ENCODE measurements at regions of chrX and their contacts with region 1.

Region 1: DNA sequence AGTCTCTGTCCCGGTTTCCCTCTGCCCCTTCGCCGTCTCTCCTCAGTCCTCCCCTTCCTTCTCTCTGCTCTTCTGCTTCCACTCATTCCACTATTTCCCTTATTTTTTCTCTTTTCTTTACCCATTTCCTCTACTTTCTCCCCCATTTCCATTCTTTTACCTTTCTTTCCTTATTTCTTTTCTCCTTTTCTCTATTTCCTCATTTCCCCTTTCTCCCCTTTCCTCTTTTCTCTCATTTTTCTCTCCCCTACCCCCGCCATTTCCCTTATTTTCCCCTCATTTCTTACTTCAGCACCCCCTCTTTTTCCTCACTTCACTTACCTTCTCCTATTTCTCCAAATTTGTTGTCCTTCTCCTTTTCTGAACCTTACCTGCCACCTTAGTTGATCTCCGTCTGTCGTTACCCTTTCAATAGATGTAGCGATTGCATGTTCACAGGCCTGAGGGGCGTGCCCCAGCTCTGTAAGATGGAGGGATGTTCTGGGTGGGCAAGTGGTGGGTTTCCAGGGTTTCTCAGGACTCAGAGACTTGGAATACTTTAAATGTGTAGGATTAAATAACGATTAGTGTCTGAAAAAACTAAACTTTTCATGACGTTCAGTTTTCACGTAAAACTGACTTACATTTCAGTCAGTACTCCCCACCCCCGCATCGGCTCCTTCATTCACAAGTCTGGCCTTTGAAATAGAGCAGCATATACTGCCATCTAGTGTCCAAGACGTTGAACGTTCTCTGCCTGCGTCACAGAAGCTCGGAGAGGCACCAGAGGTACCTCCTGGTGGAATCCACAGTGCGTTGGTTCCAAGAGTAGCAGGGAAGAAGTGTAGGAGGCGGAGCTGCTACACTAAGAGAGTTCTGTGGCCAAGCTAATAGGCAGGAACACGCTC is 641 bp upstream of the NCBP2L start:
- DNase-seq: peak; percentile 69 to 88
- ATAC-seq: peak; percentile 84 to 86
- H3K4me3 ChIP-seq: peak overlapping the region; percentile 56
- H3K27ac ChIP-seq: peak overlapping the region; percentile 74 to 81; a peak in 5 of 6 replicates
- H3K4me1 ChIP-seq: 0 out of 3 replicates have a peak, but pooled peaks cover 4% of the 10 kb centered on the region
- CTCF ChIP-seq: peak; percentile 74
- EP300 ChIP-seq: no peak
- POLR2A ChIP-seq: no peak
- RAD21 ChIP-seq: peak; percentile 87 to 90

Region 2: DNA sequence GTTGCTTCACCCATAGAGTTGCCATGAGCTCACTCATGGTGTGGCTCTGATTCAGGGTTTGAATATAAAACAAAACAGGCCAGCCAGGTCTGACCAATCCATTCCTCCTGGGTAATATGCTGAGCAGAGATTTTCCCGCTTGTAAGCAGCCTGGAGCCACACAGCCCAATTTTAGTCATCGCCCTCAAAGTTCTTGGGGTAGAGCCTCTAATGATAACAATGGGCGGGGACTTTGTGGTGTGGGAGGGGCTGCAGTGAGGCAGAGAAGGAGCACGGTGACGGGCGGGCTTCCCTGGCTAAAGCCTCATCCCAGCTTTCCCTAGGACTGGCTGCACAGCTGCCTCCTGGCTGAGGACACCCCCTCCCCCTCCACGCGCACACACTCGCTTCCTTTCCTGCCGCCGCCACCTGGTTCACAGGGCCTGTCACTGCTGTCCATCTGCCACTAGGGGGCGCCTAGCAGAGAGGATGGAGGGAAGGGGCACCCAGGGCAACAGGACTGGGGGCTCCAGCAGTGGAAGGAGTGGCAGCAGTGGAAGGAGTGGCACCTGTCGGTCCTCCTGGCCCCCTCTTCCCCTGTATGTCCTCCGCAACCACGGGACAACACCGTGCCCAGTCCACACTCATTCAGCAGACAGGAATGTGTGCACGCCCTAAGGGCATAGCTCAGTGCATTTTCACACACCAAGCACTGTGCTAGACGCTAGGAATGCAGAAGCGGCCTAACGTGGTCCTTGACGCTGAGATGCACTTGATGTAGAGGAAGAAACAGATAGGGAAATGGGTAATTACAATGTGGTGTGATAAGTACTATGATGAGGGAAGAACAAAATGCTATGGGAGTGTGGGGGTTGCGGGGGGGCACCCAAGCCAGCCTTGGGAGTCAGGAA is 121.8 kb before region 1 on chrX:
- CTCF ChIA-PET with region 1: interaction called, 236 read pairs
- POLR2A ChIA-PET with region 1: interaction called, 5 read pairs
- DNase-seq: peak in 1 of 2 experiments; percentile 59
- ATAC-seq: peak; percentile 79 to 81
- H3K4me3 ChIP-seq: no peak overlapping the region
- H3K27ac ChIP-seq: no peak overlapping the region
- H3K4me1 ChIP-seq: peaks cover 12% of the 10 kb centered on the region; the same call in 2 of the 3 replicates
- CTCF ChIP-seq: peak; percentile 52; the same call in 2 of the 3 replicates
- EP300 ChIP-seq: no peak
- POLR2A ChIP-seq: no peak
- RAD21 ChIP-seq: peak in 1 of 2 experiments; percentile 8; a peak in 1 of 5 replicates

Region 3: GRCh38 chrX:107678957-107679740 is 97.7 kb before region 1 on chrX:
- CTCF ChIA-PET with region 1: interaction called, 44 read pairs
- POLR2A ChIA-PET with region 1: interaction called, 5 read pairs
- DNase-seq: peak in 1 of 2 experiments; percentile 24
- ATAC-seq: no peak
- H3K4me3 ChIP-seq: no peak overlapping the region
- H3K27ac ChIP-seq: peak overlapping the region in 1 of 2 experiments; percentile 85; a peak in 1 of 6 replicates
- H3K4me1 ChIP-seq: peaks cover 25% of the 10 kb centered on the region
- CTCF ChIP-seq: no peak
- EP300 ChIP-seq: no peak
- POLR2A ChIP-seq: no peak
- RAD21 ChIP-seq: no peak

Region 4: GRCh38 chrX:107747596-107748161 is 29.2 kb before region 1 on chrX:
- CTCF ChIA-PET with region 1: interaction called, 26 read pairs
- POLR2A ChIA-PET with region 1: no interaction called
- DNase-seq: no peak
- ATAC-seq: peak in 1 of 2 experiments; percentile 43; a peak in 2 of 6 replicates
- H3K4me3 ChIP-seq: no peak overlapping the region
- H3K27ac ChIP-seq: peak overlapping the region; percentile 10 to 35; a peak in 2 of 6 replicates
- H3K4me1 ChIP-seq: peaks cover 11% of the 10 kb centered on the region
- CTCF ChIP-seq: no peak
- EP300 ChIP-seq: no peak
- POLR2A ChIP-seq: no peak
- RAD21 ChIP-seq: no peak

Region 5: DNA sequence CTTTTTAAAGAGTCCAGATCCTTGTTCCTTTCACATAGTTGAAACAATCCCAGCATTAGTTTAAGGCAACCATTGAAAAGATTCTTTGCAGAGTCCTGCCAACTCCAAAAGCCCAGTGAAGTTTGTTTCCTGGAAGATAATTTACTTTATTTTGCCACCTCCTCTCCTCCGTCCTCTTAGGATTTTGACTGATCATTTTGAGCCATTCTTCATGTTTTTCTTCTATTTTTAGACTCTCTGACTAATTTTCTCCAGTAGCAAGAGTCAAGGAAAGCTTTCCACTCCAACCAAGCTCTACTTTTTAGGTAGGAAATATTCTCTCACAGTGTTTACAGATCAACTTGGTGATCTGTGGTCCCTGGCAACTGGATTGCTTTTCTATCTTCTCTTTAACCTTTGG is 10.9 kb after region 1 on chrX:
- CTCF ChIA-PET with region 1: interaction called, 15 read pairs
- POLR2A ChIA-PET with region 1: no interaction called
- DNase-seq: no peak
- ATAC-seq: no peak
- H3K4me3 ChIP-seq: no peak overlapping the region
- H3K27ac ChIP-seq: no peak overlapping the region
- H3K4me1 ChIP-seq: no peaks in the 10 kb centered on the region
- CTCF ChIP-seq: no peak
- EP300 ChIP-seq: no peak
- POLR2A ChIP-seq: no peak
- RAD21 ChIP-seq: no peak

Region 6: DNA sequence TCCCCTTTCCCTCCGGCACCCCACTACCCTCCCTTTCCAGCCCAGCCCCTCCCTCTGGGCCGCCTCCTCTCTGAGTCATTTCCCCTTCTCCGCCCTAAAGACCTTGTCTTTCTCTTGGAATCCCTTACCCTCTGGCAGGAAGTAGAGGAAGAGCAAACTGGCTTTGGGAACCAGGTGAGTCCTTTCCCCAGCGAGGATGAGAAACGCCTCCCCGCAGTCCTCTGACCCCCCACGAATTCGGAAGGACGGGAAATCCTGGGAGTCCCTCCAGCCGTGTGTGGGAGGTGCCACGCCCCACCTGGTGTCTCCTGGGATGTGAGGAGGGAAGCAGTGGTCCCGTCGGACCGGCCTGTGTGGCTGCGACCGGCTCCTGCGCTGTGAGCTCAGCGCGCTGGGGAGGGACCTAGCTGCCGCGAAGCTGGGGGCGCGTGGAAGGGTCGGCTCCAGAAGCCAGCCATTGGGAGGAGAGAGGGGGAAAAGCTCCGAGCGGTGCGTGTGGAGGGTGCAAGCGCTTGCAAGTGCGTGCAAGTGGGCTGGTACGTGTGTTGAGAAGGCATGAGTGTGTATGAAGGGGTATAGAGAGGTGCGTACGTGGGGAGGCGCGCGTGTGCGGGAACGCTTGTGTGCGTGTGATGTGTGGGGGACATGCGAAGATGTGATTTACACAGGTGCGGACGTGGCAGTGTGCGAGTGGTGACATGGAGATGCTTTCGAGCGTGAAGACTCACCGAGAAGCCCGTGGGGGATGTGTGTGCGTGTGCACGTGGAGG is 159.0 kb after region 1 on chrX:
- CTCF ChIA-PET with region 1: no interaction called
- POLR2A ChIA-PET with region 1: no interaction called
- DNase-seq: peak in 1 of 2 experiments; percentile 4
- ATAC-seq: peak; percentile 75 to 80
- H3K4me3 ChIP-seq: peak overlapping the region; percentile 46
- H3K27ac ChIP-seq: peak overlapping the region; percentile 9 to 73; a peak in 5 of 6 replicates
- H3K4me1 ChIP-seq: peaks cover 5% of the 10 kb centered on the region; the same call in 2 of the 3 replicates
- CTCF ChIP-seq: no peak
- EP300 ChIP-seq: no peak
- POLR2A ChIP-seq: no peak
- RAD21 ChIP-seq: no peak